HCT116 (cell line): ENCODE measurements at regions of chr12 and their contacts with region 1.

Region 1: GRCh38 chr12:12704593-12705230 is 8.7 kb upstream of the GPR19 start:
- DNase-seq: peak; percentile 84
- ATAC-seq: peak; percentile 99
- H3K4me3 ChIP-seq: no peak overlapping the region
- H3K27ac ChIP-seq: no peak overlapping the region
- H3K4me1 ChIP-seq: peaks cover 9 to 14% of the 10 kb centered on the region in 2 experiments
- H3K27me3 ChIP-seq: no peaks in the 10 kb centered on the region
- CTCF ChIP-seq: peak; percentile 78 to 99 (median 98)
- POLR2A ChIP-seq: no peak
- RAD21 ChIP-seq: peak; percentile 97

Region 2: GRCh38 chr12:11581179-11581755 is 1123.4 kb before region 1 on chr12:
- CTCF ChIA-PET with region 1: no interaction called
- POLR2A ChIA-PET with region 1: no interaction called
- RAD21 ChIA-PET with region 1: no interaction called
- intact Hi-C with region 1: loop called (anchors 10 kb)
- DNase-seq: peak; percentile 46
- ATAC-seq: peak; percentile 38; the same call in 1 of the 2 replicates
- H3K4me3 ChIP-seq: no peak overlapping the region
- H3K27ac ChIP-seq: no peak overlapping the region
- H3K4me1 ChIP-seq: peaks cover 0 to 2% of the 10 kb centered on the region in 2 experiments; a peak in 2 of 4 replicates
- H3K27me3 ChIP-seq: peaks cover 22% of the 10 kb centered on the region
- CTCF ChIP-seq: peak; percentile 18 to 80 (median 55); a peak in 4 of 6 replicates
- POLR2A ChIP-seq: no peak
- RAD21 ChIP-seq: peak; percentile 86

Region 3: DNA sequence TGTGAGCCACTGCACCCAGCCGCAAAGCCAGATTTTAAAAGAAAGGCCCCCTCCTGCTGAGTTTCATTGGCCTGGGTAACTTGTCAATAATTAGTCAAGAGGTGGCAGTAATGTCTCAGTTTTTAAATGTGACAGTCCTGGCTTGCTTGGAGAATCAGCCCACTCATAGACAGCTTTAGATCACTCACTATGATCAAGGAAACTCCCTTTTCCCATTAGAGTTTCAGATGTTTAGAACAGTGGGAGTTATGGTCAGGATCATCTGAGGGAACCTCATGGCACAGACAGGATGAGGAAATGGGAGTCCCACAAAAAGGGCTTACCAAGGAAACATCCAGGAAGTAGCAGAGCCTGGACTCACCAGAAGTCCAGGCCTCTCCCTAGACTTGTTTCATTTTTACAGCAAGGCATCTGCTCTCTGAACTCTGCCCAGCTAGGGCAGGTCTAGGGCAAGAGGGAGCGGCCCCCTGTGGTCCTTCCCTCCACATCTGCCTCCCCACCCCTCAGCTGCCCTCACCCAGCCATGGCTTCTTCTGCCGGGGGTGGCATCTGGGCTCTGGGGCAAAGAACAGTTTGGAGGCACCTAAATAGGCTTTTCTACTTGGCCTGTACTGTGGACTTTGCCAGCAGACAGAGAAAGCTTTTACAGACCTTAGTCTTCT is 622.7 kb before region 1 on chr12:
- CTCF ChIA-PET with region 1: no interaction called
- POLR2A ChIA-PET with region 1: no interaction called
- RAD21 ChIA-PET with region 1: no interaction called
- intact Hi-C with region 1: loop called (anchors 5 kb)
- DNase-seq: peak; percentile 29
- ATAC-seq: peak; percentile 93
- H3K4me3 ChIP-seq: no peak overlapping the region
- H3K27ac ChIP-seq: no peak overlapping the region
- H3K4me1 ChIP-seq: peaks cover 0 to 5% of the 10 kb centered on the region in 2 experiments; a peak in 1 of 4 replicates
- H3K27me3 ChIP-seq: no peaks in the 10 kb centered on the region
- CTCF ChIP-seq: peak; percentile 21 to 76 (median 42); a peak in 5 of 6 replicates
- POLR2A ChIP-seq: no peak
- RAD21 ChIP-seq: peak; percentile 83

Region 4: DNA sequence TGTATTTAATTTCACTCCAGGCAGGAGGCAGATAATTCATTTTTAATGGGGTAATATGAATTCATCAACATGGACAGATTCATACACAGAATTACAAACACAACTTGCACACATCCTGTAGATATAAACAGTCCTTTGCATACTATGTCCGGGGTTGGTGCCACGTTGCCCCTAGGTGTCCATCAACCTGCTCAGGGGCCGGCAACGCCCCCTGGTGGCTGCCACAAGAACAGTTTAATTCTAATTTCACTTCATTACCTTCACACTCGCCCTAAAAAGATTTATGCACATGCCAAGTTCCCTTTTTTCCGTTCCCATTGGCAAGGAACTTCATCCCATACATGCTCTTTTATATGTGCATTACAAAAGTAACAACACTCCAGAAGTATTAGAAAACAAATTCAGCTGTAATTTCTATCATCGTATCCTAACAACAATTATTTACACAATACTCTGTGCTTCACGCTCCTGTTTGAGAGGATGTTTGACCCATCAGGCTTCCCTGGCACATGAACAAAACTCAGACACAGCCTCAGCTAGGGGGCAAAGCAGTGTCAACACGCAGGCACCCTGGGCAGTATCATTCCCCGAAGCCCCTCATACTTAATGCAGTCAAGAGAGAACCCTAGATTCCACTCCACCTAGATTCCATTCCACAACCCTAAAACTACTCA is 370.2 kb before region 1 on chr12:
- CTCF ChIA-PET with region 1: no interaction called
- POLR2A ChIA-PET with region 1: no interaction called
- RAD21 ChIA-PET with region 1: no interaction called
- intact Hi-C with region 1: no loop called
- DNase-seq: peak; percentile 47
- ATAC-seq: peak; percentile 94
- H3K4me3 ChIP-seq: no peak overlapping the region
- H3K27ac ChIP-seq: no peak overlapping the region
- H3K4me1 ChIP-seq: peaks cover 0 to 14% of the 10 kb centered on the region in 2 experiments; a peak in 1 of 4 replicates
- H3K27me3 ChIP-seq: no peaks in the 10 kb centered on the region
- CTCF ChIP-seq: peak; percentile 80 to 96 (median 85)
- POLR2A ChIP-seq: no peak
- RAD21 ChIP-seq: peak; percentile 69

Region 5: DNA sequence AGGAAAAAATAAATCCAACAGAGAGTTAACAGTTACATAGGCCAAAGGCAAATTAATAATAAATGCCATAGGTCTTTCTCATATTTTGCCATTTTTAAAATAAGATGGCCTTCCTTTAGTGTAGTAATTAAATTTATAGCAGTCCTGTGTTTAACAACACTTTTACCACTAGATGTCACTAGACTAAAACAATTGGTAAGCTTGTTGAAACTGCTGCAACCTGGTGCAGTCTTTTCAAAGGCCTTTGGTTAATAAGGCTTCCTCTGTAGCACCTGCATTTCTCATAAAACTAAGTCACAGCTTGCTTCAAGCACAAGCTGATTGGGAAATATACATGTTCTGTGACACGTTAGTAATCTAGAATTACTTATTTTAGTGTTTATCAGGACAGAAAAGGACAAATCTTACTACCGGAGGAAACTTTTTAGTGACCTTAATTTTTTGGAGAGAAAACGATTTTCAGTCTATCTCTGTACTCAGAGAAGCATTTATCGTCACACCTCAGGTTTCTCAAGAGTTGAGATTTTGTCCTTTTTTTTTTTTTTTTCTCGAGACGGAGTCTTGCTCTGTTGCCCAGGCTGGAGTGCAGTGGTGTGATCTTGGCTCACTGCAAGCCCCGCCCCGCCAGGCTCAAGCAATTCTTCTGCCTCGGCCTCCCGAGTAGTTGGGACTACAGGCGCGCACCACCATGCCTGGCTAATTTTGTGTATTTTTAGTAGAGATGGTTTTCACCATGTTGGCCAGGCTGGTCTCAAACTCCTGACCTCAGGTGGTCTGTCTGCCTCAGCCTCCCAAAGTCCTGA is 327.9 kb before region 1 on chr12:
- CTCF ChIA-PET with region 1: interaction called, 6 read pairs
- POLR2A ChIA-PET with region 1: no interaction called
- RAD21 ChIA-PET with region 1: no interaction called
- intact Hi-C with region 1: loop called (anchors 1 kb)
- DNase-seq: peak; percentile 65
- ATAC-seq: peak; percentile 88
- H3K4me3 ChIP-seq: no peak overlapping the region
- H3K27ac ChIP-seq: no peak overlapping the region
- H3K4me1 ChIP-seq: no peaks in the 10 kb centered on the region
- H3K27me3 ChIP-seq: no peaks in the 10 kb centered on the region
- CTCF ChIP-seq: peak; percentile 49 to 91 (median 81)
- POLR2A ChIP-seq: no peak
- RAD21 ChIP-seq: peak; percentile 93